ENCODE measurements at regions of chr5 and their contacts with region 1.

Region 1: DNA sequence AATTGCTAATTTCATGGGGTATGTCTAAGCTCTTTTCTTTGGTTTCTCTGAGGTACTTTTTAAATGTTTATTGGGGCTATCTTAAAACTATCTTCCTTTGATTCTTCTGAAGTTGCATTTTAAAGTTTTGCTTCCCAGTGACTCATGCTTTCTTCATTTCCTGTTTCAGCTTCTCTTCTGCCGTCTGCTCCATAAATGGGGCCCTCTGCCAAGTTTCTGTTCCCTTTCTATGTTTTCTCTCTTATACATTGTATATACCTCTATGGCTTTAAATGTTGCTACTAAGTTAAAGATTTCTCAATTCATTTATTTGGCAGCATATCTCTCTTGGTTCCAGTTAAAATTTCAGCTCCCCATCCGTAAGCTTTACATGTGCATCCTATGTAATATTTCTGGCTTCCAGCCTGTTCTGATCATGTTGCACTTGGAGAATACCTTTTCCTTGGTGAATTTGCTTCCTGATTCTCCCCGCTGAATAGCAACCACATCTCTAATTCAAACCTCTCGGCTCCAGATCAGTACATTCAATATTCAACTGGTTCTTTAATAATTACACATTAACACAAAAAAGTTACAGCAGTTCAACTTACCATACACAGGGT is 125.3 kb downstream of the ST8SIA4 start:
- DNase-seq: peak; percentile 65
- H3K4me3 ChIP-seq: peak overlapping the region; percentile 28
- H3K27ac ChIP-seq: no peak overlapping the region
- H3K4me1 ChIP-seq: peaks cover 78% of the 10 kb centered on the region
- CTCF ChIP-seq: no peak

Region 2: DNA sequence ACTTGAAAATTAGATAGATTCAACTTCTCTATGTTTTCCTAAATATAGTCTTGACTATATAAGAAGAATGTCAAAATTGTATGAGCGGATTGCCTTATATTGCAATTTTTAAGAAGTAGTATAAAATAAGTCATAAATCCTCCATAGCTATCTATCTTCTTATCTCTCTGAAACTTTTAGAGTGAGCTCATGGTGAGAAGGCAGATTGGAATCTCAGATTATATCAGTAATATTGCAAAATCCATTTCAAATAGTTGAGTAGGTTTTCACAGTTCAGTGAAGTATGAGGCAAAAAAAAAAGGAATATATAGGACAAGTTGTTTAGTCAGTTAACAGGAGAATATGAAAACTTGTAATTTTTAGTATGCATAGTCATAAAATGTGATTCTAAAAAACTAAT is 86.2 kb before region 1 on chr5:
- CTCF ChIA-PET with region 1: no interaction called
- POLR2A ChIA-PET with region 1: no interaction called
- intact Hi-C with region 1: no loop called
- DNase-seq: no peak
- H3K4me3 ChIP-seq: no peak overlapping the region
- H3K27ac ChIP-seq: no peak overlapping the region
- H3K4me1 ChIP-seq: no peaks in the 10 kb centered on the region
- CTCF ChIP-seq: no peak

Region 3: GRCh38 chr5:100790170-100790665 is 12.4 kb after region 1 on chr5:
- CTCF ChIA-PET with region 1: interaction called, 7 read pairs
- POLR2A ChIA-PET with region 1: interaction called, 35 read pairs
- intact Hi-C with region 1: no loop called
- DNase-seq: peak; percentile 74
- H3K4me3 ChIP-seq: peak overlapping the region; percentile 35
- H3K27ac ChIP-seq: peak overlapping the region; percentile 58
- H3K4me1 ChIP-seq: peaks cover 49% of the 10 kb centered on the region
- CTCF ChIP-seq: peak; percentile 80

Region 4: DNA sequence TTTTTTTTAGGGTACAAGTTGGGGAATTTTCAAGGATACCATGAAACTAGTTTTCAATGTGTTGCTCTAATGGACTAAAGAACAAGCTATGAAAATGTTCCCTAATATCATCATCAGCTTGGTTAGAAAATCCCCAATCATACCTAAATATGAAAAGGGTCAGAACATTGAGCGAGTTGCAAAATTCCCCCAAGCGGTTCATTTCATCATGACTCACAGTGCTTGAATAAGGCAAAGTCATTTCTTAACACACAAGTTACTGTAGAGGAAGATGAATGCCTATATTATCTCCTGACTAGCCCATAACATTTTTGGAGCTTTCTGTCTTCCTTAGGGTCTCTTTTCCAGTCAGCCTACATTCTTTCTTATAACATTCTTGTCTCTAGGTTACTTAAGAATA is 62.6 kb after region 1 on chr5:
- CTCF ChIA-PET with region 1: interaction called, 3 read pairs
- POLR2A ChIA-PET with region 1: interaction called, 13 read pairs
- intact Hi-C with region 1: no loop called
- DNase-seq: peak; percentile 40
- H3K4me3 ChIP-seq: peak overlapping the region; percentile 53
- H3K27ac ChIP-seq: peak overlapping the region; percentile 45
- H3K4me1 ChIP-seq: peaks cover 34% of the 10 kb centered on the region
- CTCF ChIP-seq: no peak

Region 5: GRCh38 chr5:100852988-100853449 is 75.2 kb after region 1 on chr5:
- CTCF ChIA-PET with region 1: no interaction called
- POLR2A ChIA-PET with region 1: interaction called, 34 read pairs
- intact Hi-C with region 1: loop called (anchors 1 kb)
- DNase-seq: peak; percentile 91
- H3K4me3 ChIP-seq: peak overlapping the region; percentile 54
- H3K27ac ChIP-seq: peak overlapping the region; percentile 98
- H3K4me1 ChIP-seq: peaks cover 75% of the 10 kb centered on the region
- CTCF ChIP-seq: no peak

Region 6: GRCh38 chr5:101009758-101010519 is 232.2 kb after region 1 on chr5:
- CTCF ChIA-PET with region 1: no interaction called
- POLR2A ChIA-PET with region 1: interaction called, 5 read pairs
- intact Hi-C with region 1: loop called (anchors 5 kb)
- DNase-seq: peak; percentile 73
- H3K4me3 ChIP-seq: peak overlapping the region; percentile 22
- H3K27ac ChIP-seq: no peak overlapping the region
- H3K4me1 ChIP-seq: peaks cover 13% of the 10 kb centered on the region
- CTCF ChIP-seq: no peak

Region 7: GRCh38 chr5:101045689-101046088 is 267.9 kb after region 1 on chr5:
- CTCF ChIA-PET with region 1: no interaction called
- POLR2A ChIA-PET with region 1: interaction called, 3 read pairs
- intact Hi-C with region 1: loop called (anchors 2 kb)
- DNase-seq: peak; percentile 38
- H3K4me3 ChIP-seq: no peak overlapping the region
- H3K27ac ChIP-seq: no peak overlapping the region
- H3K4me1 ChIP-seq: no peaks in the 10 kb centered on the region
- CTCF ChIP-seq: peak; percentile 79